ENCODE measurements at regions of chr3 and their contacts with region 1.

Region 1: GRCh38 chr3:128767094-128767750 is 41.2 kb downstream of the RAB7A start:
- DNase-seq: no peak
- ATAC-seq: no peak

Region 2: GRCh38 chr3:128734523-128735189 is 32.6 kb before region 1 on chr3:
- intact Hi-C with region 1: loop called (anchors 5 kb)
- DNase-seq: no peak
- ATAC-seq: no peak

Region 3: GRCh38 chr3:129120254-129121004 is 353.2 kb after region 1 on chr3:
- intact Hi-C with region 1: no loop called
- DNase-seq: peak; percentile 90
- ATAC-seq: peak; percentile 62

Measured in Right ventricle myocardium inferior (tissue), 1 donor.